ENCODE measurements at regions of chr9 and their contacts with region 1.

Region 1: GRCh38 chr9:16191691-16192402 is 639.0 kb downstream of the CCDC171 start:
- DNase-seq: peak; percentile 78
- H3K4me3 Mint-ChIP-seq: peak overlapping the region; percentile 28
- H3K27ac Mint-ChIP-seq: no peak overlapping the region
- H3K4me1 Mint-ChIP-seq: peaks cover 13% of the 10 kb centered on the region
- H3K27me3 Mint-ChIP-seq: no peaks in the 10 kb centered on the region
- CTCF ChIP-seq: peak; percentile 63

Region 2: DNA sequence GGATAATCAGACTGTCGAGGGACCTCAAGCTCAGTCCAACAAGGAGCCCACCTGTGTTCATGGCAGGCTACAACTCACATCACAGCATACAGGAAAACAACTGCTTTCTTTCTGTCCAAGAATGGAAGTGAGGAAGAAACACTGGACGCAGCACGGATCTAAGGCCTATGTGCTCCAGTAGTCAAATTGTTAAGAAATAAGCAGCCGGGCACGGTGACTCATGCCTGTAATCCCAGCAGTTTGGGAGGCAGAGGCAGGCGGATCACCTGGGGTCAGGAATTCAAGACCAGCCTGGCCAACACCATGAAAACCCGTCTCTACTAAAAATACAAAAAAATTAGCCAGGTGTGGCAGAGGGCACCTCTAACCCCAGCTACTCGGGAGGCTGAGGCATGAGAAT is 250.8 kb after region 1 on chr9:
- CTCF ChIA-PET with region 1: no interaction called
- intact Hi-C with region 1: loop called (anchors 10 kb)
- DNase-seq: peak; percentile 33
- H3K4me3 Mint-ChIP-seq: no peak overlapping the region
- H3K27ac Mint-ChIP-seq: no peak overlapping the region
- H3K4me1 Mint-ChIP-seq: peaks cover 6% of the 10 kb centered on the region
- H3K27me3 Mint-ChIP-seq: no peaks in the 10 kb centered on the region
- CTCF ChIP-seq: no peak

Region 3: DNA sequence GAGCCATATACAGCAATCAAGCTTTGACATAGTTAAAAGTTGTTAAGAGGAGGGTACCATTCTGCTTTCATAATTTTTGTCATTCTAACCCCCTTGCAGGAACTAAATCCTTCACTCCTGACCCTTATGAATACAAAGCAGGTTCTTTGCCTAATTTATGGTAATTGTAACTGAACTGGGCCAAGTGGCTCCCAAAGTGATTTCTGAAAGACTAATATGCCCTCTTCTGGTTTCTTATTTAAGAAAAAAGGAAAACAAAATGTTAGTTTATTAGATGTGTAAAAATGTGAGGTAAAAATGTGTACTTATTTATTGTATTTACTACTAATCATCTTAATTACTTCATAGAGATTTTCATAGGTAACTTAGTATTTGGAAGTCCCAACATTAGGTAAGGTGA is 410.1 kb after region 1 on chr9:
- CTCF ChIA-PET with region 1: no interaction called
- intact Hi-C with region 1: loop called (anchors 5 kb)
- DNase-seq: no peak
- H3K4me3 Mint-ChIP-seq: no peak overlapping the region
- H3K27ac Mint-ChIP-seq: no peak overlapping the region
- H3K4me1 Mint-ChIP-seq: no peaks in the 10 kb centered on the region
- H3K27me3 Mint-ChIP-seq: no peaks in the 10 kb centered on the region
- CTCF ChIP-seq: no peak

Region 4: GRCh38 chr9:16726718-16727451 is 535.0 kb after region 1 on chr9:
- CTCF ChIA-PET with region 1: no interaction called
- intact Hi-C with region 1: loop called (anchors 5 kb)
- DNase-seq: peak; percentile 51
- H3K4me3 Mint-ChIP-seq: peak overlapping the region; percentile 87
- H3K27ac Mint-ChIP-seq: no peak overlapping the region
- H3K4me1 Mint-ChIP-seq: peaks cover 8% of the 10 kb centered on the region
- H3K27me3 Mint-ChIP-seq: peaks cover 16% of the 10 kb centered on the region
- CTCF ChIP-seq: no peak

Measured in Calu3 (cell line).